AG04450 (cell line): ENCODE measurements at regions of chrX and their contacts with region 1.

Region 1: DNA sequence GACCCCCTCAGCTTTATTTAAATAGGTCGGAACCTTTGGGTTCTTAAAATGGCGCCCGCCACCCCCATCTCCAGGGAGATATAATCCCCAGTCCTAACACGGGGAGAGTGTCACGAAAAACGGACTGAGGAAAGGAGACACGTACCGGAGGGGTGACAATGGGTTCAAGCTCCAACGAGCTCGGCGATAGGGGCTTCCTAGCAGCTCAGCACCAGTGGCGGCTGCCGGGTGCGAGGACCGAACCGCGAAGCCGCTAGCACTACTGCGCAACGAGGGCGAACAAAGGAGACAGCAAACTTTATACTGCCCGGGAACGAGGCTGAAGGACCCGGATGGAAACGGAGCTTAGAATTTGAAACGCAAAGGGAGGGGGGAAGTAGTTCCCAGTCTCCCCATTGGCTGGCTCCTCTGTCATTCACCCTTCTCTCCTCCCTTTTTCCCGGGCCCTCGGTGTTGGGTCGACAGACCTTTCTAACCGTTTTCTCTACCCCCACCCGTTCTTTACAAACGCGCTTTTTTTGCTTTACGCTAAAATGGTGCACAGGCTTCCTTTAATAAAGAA is at the start of gene RBMX:
- DNase-seq: peak; percentile 90
- H3K4me3 ChIP-seq: peak within 1 kb of the TSS; percentile 82
- H3K27ac ChIP-seq: peak within 1 kb of the TSS; percentile 83
- H3K27me3 ChIP-seq: no peaks in the 10 kb centered on the region
- CTCF ChIP-seq: no peak
- polyA plus RNA-seq, gene RBMX: 145 and 183 TPM in 2 replicates

Region 2: DNA sequence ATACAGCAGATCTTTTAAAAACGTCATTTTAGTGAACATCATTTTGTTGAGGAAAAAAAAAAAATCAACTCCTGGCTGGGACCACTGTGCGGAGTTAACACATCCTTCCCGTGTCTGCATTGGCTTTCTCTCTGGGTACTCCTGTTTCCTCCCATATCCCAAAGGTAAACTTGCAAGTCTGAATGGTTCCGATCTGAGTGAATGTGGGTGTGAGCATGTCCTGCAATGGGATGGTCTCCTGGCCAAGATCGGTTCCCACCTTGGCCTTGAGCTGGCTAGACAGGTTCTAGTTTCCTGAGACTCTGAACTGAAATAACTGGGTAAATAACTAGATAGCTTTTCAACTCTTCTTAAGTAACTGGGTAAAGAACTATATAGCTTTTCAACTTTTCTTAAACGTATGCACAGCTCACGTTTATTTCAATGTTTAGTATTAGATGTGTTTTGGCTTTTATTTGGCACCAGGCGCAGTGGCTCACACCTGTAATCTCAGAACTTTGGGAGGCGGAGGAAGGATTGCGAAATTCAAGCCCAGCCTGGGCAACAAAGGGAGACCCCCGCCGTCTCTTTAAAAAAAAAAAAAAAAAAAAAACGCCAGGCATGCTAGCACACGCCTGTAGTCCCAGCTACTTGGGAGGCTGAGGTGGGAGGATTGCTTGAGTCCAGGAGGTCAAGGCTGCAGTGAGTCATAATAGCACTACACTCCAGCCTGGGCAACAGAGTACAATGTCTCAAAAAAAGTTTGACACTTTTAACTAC is 14.0 kb before region 1 on chrX:
- CTCF ChIA-PET with region 1: no interaction called
- POLR2A ChIA-PET with region 1: interaction called, 12 read pairs
- DNase-seq: no peak
- H3K4me3 ChIP-seq: no peak overlapping the region
- H3K27ac ChIP-seq: no peak overlapping the region
- H3K27me3 ChIP-seq: no peaks in the 10 kb centered on the region
- CTCF ChIP-seq: no peak

Region 3: DNA sequence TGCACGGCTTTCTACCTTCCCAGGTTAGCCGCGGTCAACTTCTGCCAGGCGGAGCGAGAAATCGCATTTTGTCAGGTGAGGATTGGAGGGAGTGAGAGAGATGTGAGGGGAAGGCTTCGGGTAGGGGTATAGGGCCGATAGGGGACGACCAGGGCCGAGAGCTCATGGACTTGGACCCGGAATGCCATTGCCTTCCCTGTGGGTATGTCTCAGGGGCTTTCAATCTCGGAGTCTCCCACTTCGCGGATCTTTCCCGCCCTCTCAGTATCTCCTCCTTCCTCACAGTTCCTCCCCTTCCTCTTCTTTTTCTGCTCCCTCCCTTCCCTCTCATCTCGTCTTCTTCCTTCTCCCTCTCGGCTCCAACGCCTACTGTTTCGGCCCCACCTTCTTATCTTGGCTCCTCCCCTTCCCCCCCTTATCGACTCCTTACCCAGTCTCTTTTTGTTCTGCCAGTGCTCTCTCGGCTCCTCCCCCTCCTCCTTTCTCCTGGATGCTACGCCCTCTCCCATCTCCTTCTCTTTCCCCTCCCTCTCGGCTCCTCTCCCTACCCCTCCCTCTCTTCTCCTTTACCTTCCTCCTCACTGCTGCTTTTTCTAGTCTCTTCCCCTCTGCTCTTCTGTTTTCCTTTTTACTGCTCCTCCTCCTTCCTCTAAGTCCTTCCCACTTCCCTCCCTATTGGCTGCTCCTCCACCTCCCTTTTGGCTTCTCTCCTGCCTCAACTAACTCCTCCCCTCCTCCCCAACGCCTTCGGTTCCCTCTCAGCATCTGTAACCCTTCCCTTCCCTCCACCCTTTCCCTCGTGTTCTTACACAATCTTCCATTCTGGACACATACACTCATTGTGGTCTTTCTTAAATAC is 29.4 kb after region 1 on chrX:
- CTCF ChIA-PET with region 1: interaction called, 3 read pairs
- POLR2A ChIA-PET with region 1: interaction called, 22 read pairs
- DNase-seq: peak; percentile 84
- H3K4me3 ChIP-seq: peak overlapping the region; percentile 68
- H3K27ac ChIP-seq: peak overlapping the region; percentile 21
- H3K27me3 ChIP-seq: no peaks in the 10 kb centered on the region
- CTCF ChIP-seq: no peak